H1 (cell line): ENCODE measurements at regions of chr12 and their contacts with region 1.

Region 1: GRCh38 chr12:46963977-46964971 is 115.1 kb upstream of the PCED1B start:
- DNase-seq: no peak
- H3K4me3 ChIP-seq: peak overlapping the region in 1 of 4 experiments; percentile 2; a peak in 1 of 8 replicates
- H3K27ac ChIP-seq: no peak overlapping the region; the same call in 1 of the 2 replicates
- H3K4me1 ChIP-seq: peaks cover 2 to 17% (median 6%) of the 10 kb centered on the region in 4 experiments; a peak in 6 of 7 replicates
- H3K27me3 ChIP-seq: no peaks in the 10 kb centered on the region
- CTCF ChIP-seq: no peak
- EP300 ChIP-seq: peak in 1 of 2 experiments; percentile 28; a peak in 1 of 3 replicates
- POLR2A ChIP-seq: no peak
- RAD21 ChIP-seq: no peak; a peak in 1 of 4 replicates

Region 2: GRCh38 chr12:46983393-46984266 is 19.4 kb after region 1 on chr12:
- CTCF ChIA-PET with region 1: interaction called, 28 read pairs
- POLR2A ChIA-PET with region 1: no interaction called
- DNase-seq: peak in 1 of 2 experiments; percentile 53
- H3K4me3 ChIP-seq: no peak overlapping the region
- H3K27ac ChIP-seq: no peak overlapping the region
- H3K4me1 ChIP-seq: no peaks in the 10 kb centered on the region; a peak in 1 of 7 replicates
- H3K27me3 ChIP-seq: no peaks in the 10 kb centered on the region
- CTCF ChIP-seq: peak in 2 of 3 experiments; percentile 68 to 79; a peak in 3 of 4 replicates
- EP300 ChIP-seq: no peak
- POLR2A ChIP-seq: no peak
- RAD21 ChIP-seq: peak; percentile 88 to 91

Region 3: DNA sequence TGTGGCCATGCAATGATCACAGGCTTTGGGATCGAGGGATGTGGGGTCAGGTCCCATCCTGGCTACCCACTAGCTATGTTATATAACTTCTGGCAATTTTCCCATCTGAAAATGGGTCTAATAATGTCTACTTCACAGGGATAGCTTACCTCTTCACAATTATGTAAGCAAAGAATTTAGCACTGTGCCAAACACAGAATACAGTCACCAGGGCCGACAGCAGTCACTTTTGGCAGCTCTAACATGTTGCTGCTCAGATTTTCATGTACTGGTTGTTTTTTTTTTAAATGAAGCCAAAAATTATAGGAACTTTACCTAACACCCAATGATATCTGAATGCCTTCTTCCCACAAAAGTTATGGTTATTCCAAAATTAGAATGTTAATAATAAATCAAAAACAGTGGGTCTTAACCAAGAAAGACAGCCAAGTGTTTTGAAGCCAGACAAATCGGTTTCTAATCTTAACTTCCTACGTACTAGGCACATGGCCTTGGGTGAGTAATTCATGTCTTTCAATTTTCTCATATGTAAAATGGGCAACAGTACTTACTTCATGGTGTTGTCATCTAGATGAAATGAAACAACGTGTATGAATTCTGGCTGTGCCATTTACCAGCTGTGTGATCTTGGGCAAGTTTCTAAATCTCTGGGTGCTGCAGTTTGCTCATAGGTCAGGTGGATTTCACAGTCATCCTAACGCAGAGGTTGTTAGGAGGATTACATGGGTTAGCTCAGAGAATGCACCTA is 102.2 kb after region 1 on chr12:
- CTCF ChIA-PET with region 1: no interaction called
- POLR2A ChIA-PET with region 1: no interaction called
- DNase-seq: no peak
- H3K4me3 ChIP-seq: no peak overlapping the region
- H3K27ac ChIP-seq: no peak overlapping the region
- H3K4me1 ChIP-seq: peaks cover 0 to 14% (median 7%) of the 10 kb centered on the region in 4 experiments; a peak in 5 of 7 replicates
- H3K27me3 ChIP-seq: no peaks in the 10 kb centered on the region
- CTCF ChIP-seq: no peak
- EP300 ChIP-seq: no peak
- POLR2A ChIP-seq: no peak
- RAD21 ChIP-seq: no peak